ENCODE measurements at regions of chr6 and their contacts with region 1.

Region 1: DNA sequence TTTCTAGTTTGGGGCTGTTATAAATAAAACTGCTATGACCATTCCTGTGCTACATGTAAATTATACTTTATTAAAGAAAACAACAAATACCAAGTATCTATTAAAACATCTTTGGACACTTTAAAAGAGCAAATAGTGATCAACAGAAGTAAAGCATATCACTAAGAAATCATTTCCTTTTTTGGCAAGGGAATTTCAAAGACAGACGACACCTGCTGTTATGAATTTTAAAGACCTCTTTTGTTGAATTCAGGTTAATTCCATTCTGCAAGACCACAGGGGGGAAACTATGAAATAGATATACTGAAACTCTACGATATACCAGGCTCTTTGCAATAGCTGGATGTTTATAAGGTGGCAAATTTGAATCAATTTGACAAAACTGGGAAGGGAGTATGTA is 7.5 kb downstream of the TSPYL1 start:
- DNase-seq: no peak
- ATAC-seq: no peak
- H3K4me3 ChIP-seq: no peak overlapping the region
- H3K27ac ChIP-seq: no peak overlapping the region
- H3K4me1 ChIP-seq: peaks cover 28% of the 10 kb centered on the region
- H3K27me3 ChIP-seq: no peaks in the 10 kb centered on the region
- CTCF ChIP-seq: no peak
- POLR2A ChIP-seq: no peak

Region 2: GRCh38 chr6:116100419-116101301 is 171.6 kb before region 1 on chr6 and contains the start of gene NT5DC1:
- intact Hi-C with region 1: no loop called
- DNase-seq: peak; percentile 83 to 91 (median 86)
- ATAC-seq: peak; percentile 94
- H3K4me3 ChIP-seq: peak within 1 kb of the TSS; percentile 65 to 73
- H3K27ac ChIP-seq: peak within 1 kb of the TSS; percentile 93 to 98 (median 96)
- H3K4me1 ChIP-seq: peaks cover 40% of the 10 kb centered on the region
- H3K27me3 ChIP-seq: no peaks in the 10 kb centered on the region
- CTCF ChIP-seq: peak in 6 of 7 experiments; percentile 24 to 59 (median 52)
- POLR2A ChIP-seq: peak; percentile 83 to 88 (median 83)
- total RNA-seq, gene NT5DC1: 5.6 to 10.9 TPM

Region 3: DNA sequence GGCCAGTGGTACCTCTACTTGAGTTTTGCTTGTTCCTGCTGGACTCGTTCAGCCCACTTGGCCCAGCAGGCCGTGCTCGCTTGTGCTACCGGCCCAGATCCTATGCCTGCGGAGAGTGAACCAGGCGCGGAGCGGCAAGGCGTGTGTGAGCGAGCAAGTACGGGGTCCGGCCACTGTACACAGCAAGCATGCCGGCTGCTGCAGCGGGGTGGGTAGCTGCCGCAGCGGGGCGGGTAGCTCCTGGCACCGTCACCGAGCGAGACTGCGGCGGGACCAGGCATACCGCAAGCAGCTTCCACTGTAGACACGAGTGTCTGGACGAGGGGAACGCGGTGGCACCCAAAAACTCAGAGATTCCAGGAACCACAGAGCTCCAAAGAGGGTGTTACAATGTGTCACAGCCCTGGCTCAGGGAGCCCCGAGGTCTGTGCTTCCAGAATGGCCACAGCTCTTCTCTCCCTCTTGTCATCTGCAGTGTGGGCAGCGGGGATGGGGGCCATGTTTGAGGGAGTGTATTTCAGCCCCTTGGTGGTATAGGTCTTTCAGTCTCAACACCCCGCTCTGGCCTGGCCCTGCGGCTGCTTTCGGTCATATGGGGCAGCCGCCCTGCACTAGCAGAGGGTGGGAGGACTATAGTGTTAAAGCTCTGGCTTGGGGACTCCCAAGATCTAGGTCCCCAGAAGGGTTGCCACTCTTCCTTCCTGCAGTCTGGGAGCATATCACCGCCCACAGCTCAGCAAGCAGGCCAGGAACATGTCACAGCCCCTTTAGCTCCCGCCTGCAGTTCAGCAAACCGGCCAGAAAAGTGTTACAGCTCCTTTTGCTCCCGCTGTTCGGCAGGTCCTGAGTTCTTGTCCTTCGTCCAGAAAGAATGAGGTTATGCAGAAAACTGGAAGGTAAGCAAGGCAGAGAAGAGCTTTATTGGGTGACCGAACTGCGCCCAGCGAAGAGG is 293.0 kb after region 1 on chr6:
- intact Hi-C with region 1: loop called (anchors 5 kb)
- DNase-seq: peak; percentile 3 to 25 (median 15)
- ATAC-seq: peak; percentile 28
- H3K4me3 ChIP-seq: no peak overlapping the region
- H3K27ac ChIP-seq: no peak overlapping the region
- H3K4me1 ChIP-seq: peaks cover 10% of the 10 kb centered on the region
- H3K27me3 ChIP-seq: peaks cover 0 to 3% of the 10 kb centered on the region in 2 donors
- CTCF ChIP-seq: no peak
- POLR2A ChIP-seq: no peak

Measured in body of pancreas (tissue), 4 donors.